Posterior cingulate gyrus (tissue), 11 donors: ENCODE measurements at regions of chr17 and their contacts with region 1.

Region 1: GRCh38 chr17:57911834-57912673 is 43.2 kb downstream of the CUEDC1 start:
- DNase-seq: peak; percentile 83 to 98 (median 92)

Region 2: DNA sequence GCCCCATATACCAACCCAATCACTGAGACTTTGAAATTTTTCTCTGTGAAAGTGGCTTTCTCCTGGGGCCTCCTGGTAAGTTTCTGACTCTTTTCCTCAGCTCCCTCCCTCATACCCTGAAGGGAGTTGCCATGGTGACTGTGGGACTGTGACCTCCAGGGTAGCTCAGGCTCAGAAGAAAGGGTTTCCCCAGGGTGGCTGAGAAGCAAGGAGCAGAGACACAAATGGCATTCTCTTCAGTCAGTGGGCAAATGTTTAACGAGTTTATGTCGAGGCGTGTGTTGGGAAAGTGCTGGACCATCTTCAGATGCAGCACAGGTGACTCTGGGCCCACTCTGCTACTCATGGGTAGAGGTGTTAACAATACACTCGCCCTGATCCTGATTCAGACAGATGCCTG is 109.0 kb before region 1 on chr17:
- intact Hi-C with region 1: no loop called
- DNase-seq: no peak

Region 3: GRCh38 chr17:57868007-57868909 is 43.8 kb before region 1 on chr17:
- intact Hi-C with region 1: no loop called
- DNase-seq: peak in 4 of 10 donors; percentile 38 to 86 (median 82)

Region 4: DNA sequence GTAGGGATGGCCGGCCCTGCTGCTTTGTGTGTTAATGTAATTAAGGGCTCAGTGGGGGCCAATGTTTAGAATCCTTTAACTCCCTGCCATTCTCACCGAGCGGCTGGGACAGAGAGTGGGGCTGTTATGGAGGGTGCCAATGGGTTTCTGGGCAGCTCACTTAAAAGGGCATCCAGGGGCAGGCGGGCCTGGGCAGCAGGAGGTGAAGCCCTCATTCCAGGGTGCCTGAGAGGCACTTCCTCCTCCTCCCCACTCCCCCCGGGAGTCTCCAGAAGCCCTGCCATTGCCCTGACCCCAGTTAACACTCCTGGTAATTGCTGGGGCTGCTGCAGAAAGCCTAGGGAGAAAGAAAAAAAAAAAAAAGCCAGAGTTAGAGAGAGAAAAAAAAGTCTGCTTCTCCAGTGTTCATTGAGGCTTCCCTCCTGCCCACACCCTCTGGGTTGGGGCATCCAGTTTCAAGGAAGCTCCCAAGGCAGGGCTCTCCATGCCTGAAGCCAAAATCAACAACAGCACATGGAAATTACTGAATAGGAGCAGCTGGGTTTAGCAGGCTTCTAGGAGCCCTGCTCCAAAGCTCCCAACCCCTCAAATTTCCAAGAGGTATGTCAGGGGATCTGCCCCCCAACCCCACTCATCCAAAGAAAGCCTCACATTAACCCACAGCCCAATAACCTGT is 15.1 kb after region 1 on chr17:
- intact Hi-C with region 1: loop called (anchors 1 kb)
- DNase-seq: peak in 4 of 10 donors; percentile 52 to 95 (median 72)

Region 5: GRCh38 chr17:57946798-57947358 is 34.8 kb after region 1 on chr17:
- intact Hi-C with region 1: loop called (anchors 5 kb)
- DNase-seq: peak in 3 of 10 donors; percentile 14 to 82 (median 40)

Region 6: DNA sequence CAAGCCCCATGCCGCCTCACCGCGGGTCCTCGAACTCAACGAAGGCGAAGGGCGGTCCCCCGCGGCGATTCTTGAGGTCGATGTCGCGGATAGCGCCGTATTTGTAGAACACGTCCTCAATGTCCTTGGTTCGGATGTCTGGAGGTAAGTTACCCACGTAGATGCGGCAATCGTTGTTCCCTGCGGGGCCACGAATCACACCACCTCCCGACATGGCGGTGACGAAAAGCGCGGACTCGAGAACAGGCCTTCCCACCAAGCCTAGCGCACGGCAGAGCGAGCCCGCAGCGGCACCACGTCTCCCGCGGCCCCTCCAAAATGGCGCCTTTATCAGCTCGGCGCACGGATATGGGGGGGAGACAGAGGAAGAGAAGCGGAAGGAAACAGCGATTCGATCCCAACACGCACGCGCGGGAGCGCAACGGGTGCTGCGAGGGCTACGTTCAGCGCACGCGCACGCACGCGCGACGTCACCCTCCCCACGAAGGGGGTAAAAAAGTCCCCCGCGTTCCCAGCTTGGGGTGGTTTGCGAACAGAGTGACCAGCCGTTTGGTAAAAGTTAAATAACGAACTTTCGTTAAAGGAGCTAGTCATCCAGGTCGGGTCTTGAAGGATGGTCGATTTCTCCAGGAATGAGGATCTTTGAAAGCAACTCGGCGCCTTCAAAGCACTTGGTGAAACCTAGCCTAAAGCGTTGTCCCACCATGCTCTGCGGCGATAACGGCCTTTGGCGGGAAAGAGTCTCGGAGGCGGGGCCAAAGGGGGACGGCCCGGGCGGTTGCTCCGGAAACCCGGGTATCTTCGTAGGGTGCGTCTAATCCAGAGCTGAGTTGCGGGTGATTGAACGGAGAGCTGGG is 95.1 kb after region 1 on chr17 and contains the start of gene SRSF1:
- intact Hi-C with region 1: no loop called
- DNase-seq: peak; percentile 91 to 99 (median 96)